ENCODE measurements at regions of chr3 and their contacts with region 1.

Region 1: GRCh38 chr3:45507820-45508317 is 86.7 kb upstream of the LIMD1 start:
- DNase-seq: no peak
- ATAC-seq: peak; percentile 46 to 62 (median 49)
- H3K4me3 ChIP-seq: no peak overlapping the region
- H3K4me3 Mint-ChIP-seq: no peak overlapping the region
- H3K27ac ChIP-seq: no peak overlapping the region
- H3K27ac Mint-ChIP-seq: no peak overlapping the region
- H3K4me1 ChIP-seq: peaks cover 6% of the 10 kb centered on the region
- H3K4me1 Mint-ChIP-seq: no peaks in the 10 kb centered on the region
- H3K27me3 ChIP-seq: no peaks in the 10 kb centered on the region
- H3K27me3 Mint-ChIP-seq: no peaks in the 10 kb centered on the region
- CTCF ChIP-seq: no peak

Region 2: GRCh38 chr3:45037734-45038455 is 470.0 kb before region 1 on chr3:
- intact Hi-C with region 1: loop called (anchors 10 kb)
- DNase-seq: peak; percentile 78 to 97
- ATAC-seq: peak; percentile 90 to 93 (median 91)
- H3K4me3 ChIP-seq: no peak overlapping the region
- H3K4me3 Mint-ChIP-seq: peak overlapping the region; percentile 70
- H3K27ac ChIP-seq: no peak overlapping the region
- H3K27ac Mint-ChIP-seq: no peak overlapping the region
- H3K4me1 ChIP-seq: peaks cover 48% of the 10 kb centered on the region
- H3K4me1 Mint-ChIP-seq: peaks cover 44 to 57% of the 10 kb centered on the region in 2 donors
- H3K27me3 ChIP-seq: peaks cover 10% of the 10 kb centered on the region
- H3K27me3 Mint-ChIP-seq: peaks cover 3 to 22% of the 10 kb centered on the region in 2 donors
- CTCF ChIP-seq: peak; percentile 90

Region 3: DNA sequence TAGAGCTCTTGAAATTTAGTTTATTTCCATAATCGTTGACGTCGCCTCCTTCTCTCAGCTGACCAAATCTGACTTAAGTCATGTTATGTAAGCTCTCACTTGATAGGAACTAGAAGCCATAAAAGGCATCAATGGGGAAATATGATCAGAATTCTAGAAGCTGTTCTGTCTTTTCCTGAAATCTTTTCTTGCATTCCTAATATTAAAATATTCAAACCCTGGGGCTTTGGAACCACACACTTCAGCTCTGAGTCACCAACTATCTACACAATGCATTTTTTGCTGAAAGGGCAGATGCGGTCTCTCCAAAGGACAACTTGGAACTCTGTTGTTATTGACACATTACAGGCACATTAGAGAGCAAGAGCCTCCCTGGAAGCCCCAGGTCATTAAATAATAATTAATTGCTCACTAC is 28.2 kb before region 1 on chr3:
- intact Hi-C with region 1: no loop called
- DNase-seq: no peak
- ATAC-seq: no peak
- H3K4me3 ChIP-seq: no peak overlapping the region
- H3K4me3 Mint-ChIP-seq: no peak overlapping the region
- H3K27ac ChIP-seq: no peak overlapping the region
- H3K27ac Mint-ChIP-seq: no peak overlapping the region
- H3K4me1 ChIP-seq: no peaks in the 10 kb centered on the region
- H3K4me1 Mint-ChIP-seq: no peaks in the 10 kb centered on the region
- H3K27me3 ChIP-seq: no peaks in the 10 kb centered on the region
- H3K27me3 Mint-ChIP-seq: no peaks in the 10 kb centered on the region
- CTCF ChIP-seq: no peak

Region 4: GRCh38 chr3:45518376-45519135 is 10.7 kb after region 1 on chr3:
- intact Hi-C with region 1: no loop called
- DNase-seq: no peak
- ATAC-seq: no peak
- H3K4me3 ChIP-seq: no peak overlapping the region
- H3K4me3 Mint-ChIP-seq: no peak overlapping the region
- H3K27ac ChIP-seq: no peak overlapping the region
- H3K27ac Mint-ChIP-seq: no peak overlapping the region
- H3K4me1 ChIP-seq: no peaks in the 10 kb centered on the region
- H3K4me1 Mint-ChIP-seq: no peaks in the 10 kb centered on the region
- H3K27me3 ChIP-seq: no peaks in the 10 kb centered on the region
- H3K27me3 Mint-ChIP-seq: no peaks in the 10 kb centered on the region
- CTCF ChIP-seq: no peak

Region 5: GRCh38 chr3:45546716-45547701 is 39.1 kb after region 1 on chr3:
- intact Hi-C with region 1: no loop called
- DNase-seq: peak in 1 of 2 donors; percentile 48
- ATAC-seq: no peak
- H3K4me3 ChIP-seq: no peak overlapping the region
- H3K4me3 Mint-ChIP-seq: no peak overlapping the region
- H3K27ac ChIP-seq: no peak overlapping the region
- H3K27ac Mint-ChIP-seq: peak overlapping the region; percentile 38 to 97
- H3K4me1 ChIP-seq: peaks cover 53% of the 10 kb centered on the region
- H3K4me1 Mint-ChIP-seq: peaks cover 32 to 44% of the 10 kb centered on the region in 2 donors
- H3K27me3 ChIP-seq: no peaks in the 10 kb centered on the region
- H3K27me3 Mint-ChIP-seq: no peaks in the 10 kb centered on the region
- CTCF ChIP-seq: no peak

Region 6: DNA sequence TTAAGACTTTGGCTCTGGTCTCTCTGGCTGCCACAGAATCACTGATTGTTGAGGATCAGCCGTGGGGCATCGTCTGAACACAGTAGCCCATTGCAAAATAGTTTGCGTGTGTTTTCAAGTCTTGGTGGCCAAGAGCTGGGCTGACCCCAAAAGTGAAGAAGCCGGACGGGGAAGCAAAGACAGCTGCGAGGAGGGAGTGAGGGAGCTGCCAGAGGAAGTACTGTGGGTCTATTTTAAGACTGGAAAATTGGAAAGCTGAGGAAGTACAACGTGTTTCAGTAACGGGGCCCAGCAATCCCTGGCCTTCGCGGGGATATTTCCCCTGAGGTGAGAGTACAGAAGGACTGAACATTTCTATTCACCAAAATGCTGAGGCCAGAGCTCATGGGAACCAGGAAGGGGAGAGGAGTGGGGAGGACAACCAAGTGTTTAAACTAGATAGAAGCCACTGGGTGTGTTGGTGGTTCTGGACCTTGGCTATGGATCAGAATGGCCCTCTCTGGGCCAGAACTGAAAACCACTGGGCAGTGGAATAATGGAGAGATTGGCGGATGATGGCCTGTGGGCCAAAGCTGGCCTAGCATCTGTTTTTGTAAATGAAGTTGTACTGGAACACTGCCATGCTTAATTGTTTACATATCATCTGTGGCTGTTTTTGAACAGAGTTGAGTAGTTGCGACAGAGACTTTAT is 52.6 kb after region 1 on chr3:
- intact Hi-C with region 1: no loop called
- DNase-seq: no peak
- ATAC-seq: no peak
- H3K4me3 ChIP-seq: no peak overlapping the region
- H3K4me3 Mint-ChIP-seq: no peak overlapping the region
- H3K27ac ChIP-seq: no peak overlapping the region
- H3K27ac Mint-ChIP-seq: no peak overlapping the region
- H3K4me1 ChIP-seq: peaks cover under 1% of the 10 kb centered on the region
- H3K4me1 Mint-ChIP-seq: peaks cover 0 to 4% of the 10 kb centered on the region in 2 donors
- H3K27me3 ChIP-seq: no peaks in the 10 kb centered on the region
- H3K27me3 Mint-ChIP-seq: peaks cover 0 to 2% of the 10 kb centered on the region in 2 donors
- CTCF ChIP-seq: no peak

Region 7: GRCh38 chr3:45593708-45594609 is 86.1 kb after region 1 on chr3:
- intact Hi-C with region 1: loop called (anchors 5 kb)
- DNase-seq: peak; percentile 69 to 81
- ATAC-seq: peak; percentile 85 to 90 (median 88)
- H3K4me3 ChIP-seq: peak overlapping the region; percentile 64
- H3K4me3 Mint-ChIP-seq: peak overlapping the region; percentile 92
- H3K27ac ChIP-seq: peak overlapping the region; percentile 37
- H3K27ac Mint-ChIP-seq: peak overlapping the region; percentile 81 to 90
- H3K4me1 ChIP-seq: peaks cover 58% of the 10 kb centered on the region
- H3K4me1 Mint-ChIP-seq: peaks cover 51 to 61% of the 10 kb centered on the region in 2 donors
- H3K27me3 ChIP-seq: no peaks in the 10 kb centered on the region
- H3K27me3 Mint-ChIP-seq: no peaks in the 10 kb centered on the region
- CTCF ChIP-seq: no peak

Region 8: DNA sequence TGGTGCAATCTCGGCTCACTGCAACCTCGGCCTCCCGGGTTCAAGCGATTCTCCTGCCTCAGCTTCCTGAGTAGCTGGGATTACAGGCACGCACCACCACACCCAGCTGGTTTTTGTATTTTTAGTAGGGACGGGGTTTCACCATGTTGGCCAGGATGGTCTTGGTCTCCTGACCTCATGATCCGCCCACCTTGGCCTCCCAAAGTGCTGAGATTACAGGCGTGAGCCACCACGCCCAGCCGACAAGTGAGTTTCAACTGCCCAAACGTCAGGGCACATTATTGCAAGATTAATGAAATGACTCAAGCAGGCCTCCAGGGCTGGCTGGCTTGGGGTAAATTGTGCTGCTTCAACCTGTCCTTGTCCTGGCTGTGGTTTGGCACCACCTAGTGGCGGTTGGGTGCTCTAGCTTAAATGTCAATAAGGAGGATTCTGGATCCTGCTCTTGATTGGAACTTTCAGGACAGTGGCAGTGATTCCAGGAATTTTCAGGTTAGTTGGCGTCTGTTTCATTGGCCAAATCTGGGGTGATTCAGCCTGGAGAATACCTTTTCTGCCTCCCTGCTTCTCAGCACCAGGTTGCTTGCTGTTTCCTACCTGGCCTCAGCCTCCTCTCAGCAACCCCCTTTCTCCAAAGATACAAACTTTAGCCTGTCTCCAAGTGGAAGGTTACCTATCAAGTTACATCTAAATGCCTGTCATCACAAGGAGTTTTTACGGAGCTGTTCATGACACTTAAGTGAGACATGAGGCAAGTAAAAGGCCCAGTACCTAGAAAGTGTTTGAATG is 148.9 kb after region 1 on chr3:
- intact Hi-C with region 1: loop called (anchors 1 kb)
- DNase-seq: peak; percentile 79 to 93
- ATAC-seq: peak; percentile 96 to 98 (median 96)
- H3K4me3 ChIP-seq: no peak overlapping the region
- H3K4me3 Mint-ChIP-seq: no peak overlapping the region
- H3K27ac ChIP-seq: no peak overlapping the region
- H3K27ac Mint-ChIP-seq: no peak overlapping the region
- H3K4me1 ChIP-seq: peaks cover 3% of the 10 kb centered on the region
- H3K4me1 Mint-ChIP-seq: peaks cover 19 to 22% of the 10 kb centered on the region in 2 donors
- H3K27me3 ChIP-seq: no peaks in the 10 kb centered on the region
- H3K27me3 Mint-ChIP-seq: no peaks in the 10 kb centered on the region
- CTCF ChIP-seq: peak; percentile 86

Region 9: DNA sequence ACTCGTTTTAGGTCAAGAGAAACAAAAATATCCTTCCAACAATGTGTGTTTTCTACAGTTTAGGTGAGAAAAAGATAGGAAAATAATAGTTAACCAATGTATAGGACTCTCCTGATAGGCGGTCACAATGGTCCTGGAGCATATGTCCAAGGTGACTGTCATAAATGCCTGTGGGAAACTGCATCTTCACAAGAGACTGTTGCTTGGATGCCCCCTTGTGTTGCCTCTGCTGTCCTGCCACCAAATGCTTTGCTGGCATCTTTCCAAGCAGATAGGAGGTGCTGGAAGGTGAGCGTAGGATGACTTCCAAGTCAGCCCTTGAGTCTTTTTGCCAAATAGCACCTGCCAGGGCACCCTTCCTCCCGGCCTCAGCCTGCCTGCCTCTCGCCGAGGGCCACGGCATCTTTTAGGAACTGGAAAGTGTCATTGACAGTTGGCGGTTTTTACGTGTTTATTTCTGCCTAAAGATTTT is 157.3 kb after region 1 on chr3:
- intact Hi-C with region 1: loop called (anchors 2 kb)
- DNase-seq: peak; percentile 35 to 90
- ATAC-seq: peak; percentile 28 to 34 (median 30)
- H3K4me3 ChIP-seq: peak overlapping the region; percentile 40
- H3K4me3 Mint-ChIP-seq: peak overlapping the region; percentile 84
- H3K27ac ChIP-seq: peak overlapping the region; percentile 61
- H3K27ac Mint-ChIP-seq: peak overlapping the region; percentile 92 to 95
- H3K4me1 ChIP-seq: peaks cover 19% of the 10 kb centered on the region
- H3K4me1 Mint-ChIP-seq: peaks cover 19 to 26% of the 10 kb centered on the region in 2 donors
- H3K27me3 ChIP-seq: no peaks in the 10 kb centered on the region
- H3K27me3 Mint-ChIP-seq: no peaks in the 10 kb centered on the region
- CTCF ChIP-seq: peak; percentile 64

Region 10: DNA sequence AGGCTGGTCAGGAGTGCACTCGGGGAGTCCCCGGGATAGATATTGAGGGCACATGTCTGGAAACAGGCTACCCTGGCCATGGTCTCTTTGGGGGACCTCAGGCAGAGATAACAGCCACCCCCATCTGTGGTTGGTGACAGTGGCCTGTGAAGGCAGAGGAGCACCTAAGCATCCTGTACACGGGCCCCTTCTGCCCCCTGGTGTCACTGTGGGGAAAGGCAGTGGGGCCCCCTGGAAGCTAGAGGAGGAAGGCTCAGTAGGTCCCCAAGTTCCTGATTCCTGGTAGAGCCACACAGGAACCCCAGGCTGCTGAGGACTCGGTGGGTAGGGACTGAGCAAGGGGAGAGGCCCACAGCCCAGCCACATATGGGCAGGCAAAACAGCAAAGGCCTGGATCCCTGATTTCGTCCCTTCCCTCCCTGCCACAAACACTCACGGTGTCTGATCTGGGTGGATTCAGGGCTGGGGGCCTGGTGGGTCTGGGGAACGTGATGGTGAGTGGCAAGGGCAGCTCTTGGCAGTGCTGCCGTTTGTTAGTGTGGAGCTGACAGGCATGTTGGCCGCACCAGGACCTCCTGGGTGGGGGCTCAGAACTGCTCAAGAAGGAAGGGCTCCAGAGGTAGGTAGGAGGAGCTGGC is 421.3 kb after region 1 on chr3:
- intact Hi-C with region 1: loop called (anchors 5 kb)
- DNase-seq: peak; percentile 71 to 79
- ATAC-seq: peak; percentile 78 to 99 (median 99)
- H3K4me3 ChIP-seq: no peak overlapping the region
- H3K4me3 Mint-ChIP-seq: no peak overlapping the region
- H3K27ac ChIP-seq: no peak overlapping the region
- H3K27ac Mint-ChIP-seq: peak overlapping the region; percentile 46 to 89
- H3K4me1 ChIP-seq: peaks cover 7% of the 10 kb centered on the region
- H3K4me1 Mint-ChIP-seq: peaks cover 9 to 18% of the 10 kb centered on the region in 2 donors
- H3K27me3 ChIP-seq: no peaks in the 10 kb centered on the region
- H3K27me3 Mint-ChIP-seq: no peaks in the 10 kb centered on the region
- CTCF ChIP-seq: peak; percentile 85